ENCODE measurements at regions of chr12 and their contacts with region 1.

Region 1: DNA sequence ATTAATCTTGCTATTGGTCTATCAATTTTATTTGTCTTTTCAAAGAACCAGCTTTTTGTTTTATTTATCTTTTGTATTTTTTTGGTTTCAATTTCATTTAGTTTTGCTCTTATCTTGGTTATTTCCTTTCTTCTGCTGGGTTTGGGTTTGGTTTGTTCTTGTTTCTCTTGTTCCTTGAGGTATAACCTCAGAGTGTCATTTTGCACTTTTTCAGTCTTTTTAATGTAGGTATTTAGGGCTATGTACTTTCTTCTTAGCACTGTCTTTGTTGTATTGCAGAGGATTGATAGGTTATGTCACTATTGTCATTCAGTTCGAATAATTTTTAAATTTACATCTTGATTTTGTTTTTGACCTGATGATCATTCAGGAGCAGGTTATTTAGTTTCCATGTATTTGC is 92.7 kb upstream of the DCD start:
- DNase-seq: no peak
- ATAC-seq: peak; percentile 80
- H3K4me3 Mint-ChIP-seq: peak overlapping the region; percentile 32
- H3K27ac Mint-ChIP-seq: peak overlapping the region; percentile 80
- H3K4me1 Mint-ChIP-seq: peaks cover 74% of the 10 kb centered on the region
- H3K27me3 Mint-ChIP-seq: peaks cover 3% of the 10 kb centered on the region

Region 2: GRCh38 chr12:54723379-54724256 is 17.3 kb before region 1 on chr12:
- CTCF ChIA-PET with region 1: interaction called, 20 read pairs
- POLR2A ChIA-PET with region 1: no interaction called
- DNase-seq: peak; percentile 58
- ATAC-seq: peak; percentile 57
- H3K4me3 Mint-ChIP-seq: no peak overlapping the region
- H3K27ac Mint-ChIP-seq: no peak overlapping the region
- H3K4me1 Mint-ChIP-seq: peaks cover 10% of the 10 kb centered on the region
- H3K27me3 Mint-ChIP-seq: peaks cover 20% of the 10 kb centered on the region

Region 3: GRCh38 chr12:55043542-55043941 is 302.7 kb after region 1 on chr12:
- CTCF ChIA-PET with region 1: no interaction called
- POLR2A ChIA-PET with region 1: no interaction called
- DNase-seq: no peak
- ATAC-seq: no peak
- H3K4me3 Mint-ChIP-seq: no peak overlapping the region
- H3K27ac Mint-ChIP-seq: no peak overlapping the region
- H3K4me1 Mint-ChIP-seq: no peaks in the 10 kb centered on the region
- H3K27me3 Mint-ChIP-seq: peaks cover 2% of the 10 kb centered on the region